MCF 10A (cell line): ENCODE measurements at regions of chr4 and their contacts with region 1.

Region 1: GRCh38 chr4:30948653-30949052 is 228.5 kb downstream of the PCDH7 start:
- DNase-seq: peak; percentile 88
- H3K4me3 Mint-ChIP-seq: no peak overlapping the region
- H3K27ac Mint-ChIP-seq: no peak overlapping the region
- H3K4me1 Mint-ChIP-seq: peaks cover 36% of the 10 kb centered on the region
- H3K27me3 Mint-ChIP-seq: no peaks in the 10 kb centered on the region
- CTCF ChIP-seq: no peak

Region 2: GRCh38 chr4:30757357-30757756 is 191.3 kb before region 1 on chr4:
- CTCF ChIA-PET with region 1: no interaction called
- POLR2A ChIA-PET with region 1: interaction called, 14 read pairs
- intact Hi-C with region 1: no loop called
- DNase-seq: peak; percentile 93
- H3K4me3 Mint-ChIP-seq: no peak overlapping the region
- H3K27ac Mint-ChIP-seq: no peak overlapping the region
- H3K4me1 Mint-ChIP-seq: peaks cover 7% of the 10 kb centered on the region
- H3K27me3 Mint-ChIP-seq: no peaks in the 10 kb centered on the region
- CTCF ChIP-seq: no peak

Region 3: GRCh38 chr4:31272331-31273061 is 323.8 kb after region 1 on chr4:
- CTCF ChIA-PET with region 1: no interaction called
- POLR2A ChIA-PET with region 1: no interaction called
- intact Hi-C with region 1: no loop called
- DNase-seq: no peak
- H3K4me3 Mint-ChIP-seq: no peak overlapping the region
- H3K27ac Mint-ChIP-seq: no peak overlapping the region
- H3K4me1 Mint-ChIP-seq: no peaks in the 10 kb centered on the region
- H3K27me3 Mint-ChIP-seq: no peaks in the 10 kb centered on the region
- CTCF ChIP-seq: no peak